HepG2 (cell line): ENCODE measurements at regions of chr7 and their contacts with region 1.

Region 1: DNA sequence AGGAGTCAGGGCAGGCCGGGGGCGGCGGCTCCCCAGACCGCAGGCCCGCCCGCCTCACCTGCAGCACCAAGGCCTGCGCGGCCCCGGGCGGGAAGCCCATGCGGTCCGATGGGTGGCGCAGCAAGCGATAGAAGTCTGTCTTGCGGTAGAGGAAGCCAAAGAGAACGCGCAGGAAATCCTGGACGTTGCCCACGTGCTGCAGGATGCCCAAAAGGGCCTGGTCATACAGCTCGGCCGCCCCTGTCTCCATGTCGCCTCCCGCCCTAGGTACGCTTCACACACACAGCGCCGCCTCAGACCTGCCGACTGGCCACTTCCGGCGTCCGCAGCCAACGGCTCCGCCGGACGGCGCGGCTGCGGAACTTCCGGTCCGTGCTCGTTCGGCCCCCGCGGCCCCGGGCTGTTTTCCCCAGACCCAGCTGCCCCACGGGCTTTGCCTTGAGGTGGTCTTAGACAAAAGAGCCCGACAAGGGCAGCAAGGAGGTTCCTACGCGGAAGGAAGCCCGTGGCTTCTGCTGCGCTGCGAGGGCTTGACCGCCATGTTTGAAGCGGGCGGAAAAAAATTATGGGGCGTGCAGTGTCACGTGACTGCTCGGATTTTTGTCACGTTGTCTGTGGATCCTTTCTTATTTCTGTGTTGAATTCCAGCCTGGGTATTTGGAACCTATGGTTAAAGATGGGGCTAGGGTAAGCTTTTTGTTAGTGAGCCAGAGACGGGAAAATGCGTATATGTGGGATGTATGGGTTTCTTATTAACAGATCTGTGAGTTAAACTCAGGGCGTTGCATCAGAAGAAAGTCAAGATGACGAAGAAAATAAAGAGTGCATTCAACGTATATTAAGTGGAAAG is at the start of gene NUDCD3:
- DNase-seq: peak; percentile 75
- ATAC-seq: peak; percentile 99
- H3K4me3 ChIP-seq: peak within 1 kb of the TSS; percentile 74 to 93 (median 90)
- H3K27ac ChIP-seq: peak within 1 kb of the TSS; percentile 96
- H3K4me1 ChIP-seq: peaks cover 55% of the 10 kb centered on the region
- H3K27me3 ChIP-seq: no peaks in the 10 kb centered on the region; a peak in 1 of 5 replicates
- CTCF ChIP-seq: peak; percentile 55
- EP300 ChIP-seq: no peak; a peak in 1 of 4 replicates
- POLR2A ChIP-seq: peak; percentile 78 to 91
- RAD21 ChIP-seq: peak; percentile 62; the same call in 1 of the 2 replicates
- total RNA-seq, gene NUDCD3: 49.9 and 54.6 TPM in 2 replicates

Region 2: DNA sequence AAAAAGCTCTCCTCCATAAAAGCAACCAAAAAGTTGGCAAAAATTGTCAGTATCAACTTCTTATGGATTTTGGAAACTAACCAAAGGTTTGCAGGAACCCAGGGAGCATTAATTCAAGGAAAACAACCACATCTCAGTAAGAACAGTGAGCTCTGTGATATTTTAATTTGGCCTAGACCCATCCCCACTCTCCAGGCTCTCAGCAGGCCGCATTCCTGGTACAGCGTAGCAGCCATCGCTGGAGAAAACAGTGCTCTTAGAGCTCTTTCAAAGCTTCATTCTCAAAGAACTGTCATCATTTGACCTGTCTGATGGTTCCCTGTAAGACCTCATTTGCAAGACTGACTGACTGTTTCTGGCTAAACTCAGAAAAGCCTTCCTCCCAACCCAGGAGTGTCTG is 82.0 kb before region 1 on chr7:
- CTCF ChIA-PET with region 1: no interaction called
- POLR2A ChIA-PET with region 1: no interaction called
- in situ Hi-C with region 1: no loop called
- intact Hi-C with region 1: no loop called
- DNase-seq: no peak
- ATAC-seq: no peak
- H3K4me3 ChIP-seq: no peak overlapping the region
- H3K27ac ChIP-seq: no peak overlapping the region
- H3K4me1 ChIP-seq: no peaks in the 10 kb centered on the region
- H3K27me3 ChIP-seq: no peaks in the 10 kb centered on the region
- CTCF ChIP-seq: no peak
- EP300 ChIP-seq: no peak
- POLR2A ChIP-seq: no peak
- RAD21 ChIP-seq: no peak

Region 3: DNA sequence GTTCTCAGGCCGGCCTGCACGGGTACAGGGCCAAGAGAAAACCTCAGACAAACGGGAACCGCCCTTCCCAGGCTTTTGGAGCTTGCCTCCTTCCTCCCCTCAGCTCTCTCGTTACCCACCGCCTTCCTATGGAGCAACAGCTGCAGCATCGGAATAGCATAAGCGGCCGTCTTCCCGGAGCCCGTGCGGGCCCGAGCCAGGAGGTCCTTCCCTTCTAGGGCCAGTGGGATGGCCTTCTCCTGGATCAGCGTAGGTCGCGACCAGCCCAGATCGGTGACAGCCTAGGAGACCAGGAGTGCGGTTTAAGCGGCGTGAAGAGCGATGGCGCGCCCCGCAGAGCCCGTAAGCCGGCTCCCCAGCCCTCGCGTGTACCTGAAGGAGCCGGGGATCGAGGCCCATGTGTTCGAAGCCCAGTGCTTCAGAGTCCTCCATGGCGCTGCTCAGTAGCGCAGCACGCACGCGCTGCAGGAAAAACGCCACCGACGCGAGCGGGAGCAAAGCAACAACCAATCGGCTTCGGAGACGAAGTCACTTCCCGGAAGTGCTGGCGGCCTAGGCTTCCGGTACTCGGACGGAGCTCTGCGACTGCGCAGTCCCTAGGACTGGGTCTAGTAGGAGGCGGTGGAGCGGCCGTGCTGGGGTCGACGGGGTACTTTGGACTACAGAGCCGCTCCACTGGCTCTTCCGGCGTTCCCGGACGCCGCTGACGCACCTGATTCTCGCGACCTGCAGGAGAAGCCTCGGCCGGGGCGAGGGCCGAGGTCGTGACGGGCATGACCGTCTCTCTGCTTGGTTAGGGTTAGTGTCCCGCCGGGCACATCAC is 83.1 kb after region 1 on chr7 and contains the start of gene DDX56:
- CTCF ChIA-PET with region 1: no interaction called
- POLR2A ChIA-PET with region 1: interaction called, 15 read pairs
- in situ Hi-C with region 1: no loop called
- intact Hi-C with region 1: loop called (anchors 5 kb)
- DNase-seq: peak; percentile 96
- ATAC-seq: peak; percentile 97
- H3K4me3 ChIP-seq: peak within 1 kb of the TSS; percentile 77 to 91 (median 83)
- H3K27ac ChIP-seq: peak within 1 kb of the TSS; percentile 83
- H3K4me1 ChIP-seq: peaks cover 39% of the 10 kb centered on the region
- H3K27me3 ChIP-seq: no peaks in the 10 kb centered on the region; a peak in 1 of 5 replicates
- CTCF ChIP-seq: no peak; the same call in 1 of the 2 replicates
- EP300 ChIP-seq: no peak
- POLR2A ChIP-seq: peak in 1 of 2 experiments; percentile 86; a peak in 2 of 4 replicates
- RAD21 ChIP-seq: peak; percentile 54
- total RNA-seq, gene DDX56: 105 and 120 TPM in 2 replicates